ENCODE measurements at regions of chr4 and their contacts with region 1.

Region 1: GRCh38 chr4:39353478-39354253 is 12.5 kb downstream of the RFC1 start:
- DNase-seq: peak; percentile 44
- H3K4me3 Mint-ChIP-seq: peak overlapping the region; percentile 55
- H3K27ac Mint-ChIP-seq: peak overlapping the region; percentile 95
- H3K4me1 Mint-ChIP-seq: peaks cover 83% of the 10 kb centered on the region
- H3K27me3 Mint-ChIP-seq: no peaks in the 10 kb centered on the region

Region 2: DNA sequence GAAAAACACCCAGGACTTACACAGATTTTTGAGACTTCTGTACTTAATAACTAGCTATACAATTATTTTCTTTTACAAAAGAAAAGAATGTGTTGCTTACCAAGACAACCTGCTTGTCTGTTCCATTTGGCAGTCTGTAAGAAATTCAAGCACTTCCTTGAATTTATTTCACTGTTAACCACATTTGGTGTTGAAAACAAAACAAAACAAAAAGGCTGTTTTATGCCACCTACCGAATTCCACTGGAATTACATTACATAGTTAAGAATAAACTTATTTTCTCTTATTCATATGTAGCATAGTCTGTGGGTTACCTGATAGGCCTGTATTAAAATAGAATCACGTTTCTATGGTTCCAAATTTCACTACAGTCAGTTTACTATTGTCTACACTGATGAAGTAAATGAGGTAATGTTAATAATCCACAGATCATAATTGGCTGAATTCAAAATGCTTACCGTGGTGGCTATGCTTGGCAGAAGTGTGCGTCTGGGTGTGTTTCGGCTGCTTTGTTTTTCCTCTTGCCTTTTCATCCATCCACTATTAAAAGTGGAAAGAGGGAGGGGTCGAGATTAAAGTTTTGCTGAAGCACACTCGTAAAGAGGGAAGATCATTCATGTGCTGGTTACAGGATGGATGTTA is 548.9 kb before region 1 on chr4 and contains the start of gene TLR1:
- CTCF ChIA-PET with region 1: no interaction called
- intact Hi-C with region 1: loop called (anchors 1 kb)
- DNase-seq: peak; percentile 30
- H3K4me3 Mint-ChIP-seq: peak within 1 kb of the TSS; percentile 69
- H3K27ac Mint-ChIP-seq: peak within 1 kb of the TSS; percentile 90
- H3K4me1 Mint-ChIP-seq: peaks cover 30% of the 10 kb centered on the region
- H3K27me3 Mint-ChIP-seq: no peaks in the 10 kb centered on the region
- total RNA-seq, gene TLR1: 4.0 to 4.2 TPM

Region 3: DNA sequence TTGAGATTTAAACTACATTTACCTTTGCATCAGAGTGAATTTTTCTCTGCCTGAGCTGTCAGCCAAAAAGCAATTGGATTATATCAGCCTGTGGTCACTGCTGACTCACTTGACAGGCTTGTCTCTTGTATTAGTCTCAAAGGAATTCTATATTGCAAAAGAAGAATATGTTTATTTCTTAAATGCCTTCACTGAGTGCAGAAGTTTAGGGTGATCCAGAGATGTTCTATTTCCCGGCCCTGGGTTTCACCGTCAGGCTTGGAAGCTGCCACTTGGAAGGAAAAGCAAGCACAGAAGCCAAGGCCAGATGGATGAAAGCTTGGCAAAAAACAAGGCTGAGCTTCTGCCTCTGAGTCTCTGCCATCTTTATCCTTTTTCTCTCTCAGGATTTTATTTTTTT is 405.1 kb before region 1 on chr4:
- CTCF ChIA-PET with region 1: no interaction called
- intact Hi-C with region 1: loop called (anchors 2 kb)
- DNase-seq: no peak
- H3K4me3 Mint-ChIP-seq: no peak overlapping the region
- H3K27ac Mint-ChIP-seq: no peak overlapping the region
- H3K4me1 Mint-ChIP-seq: peaks cover 26% of the 10 kb centered on the region
- H3K27me3 Mint-ChIP-seq: no peaks in the 10 kb centered on the region

Region 4: GRCh38 chr4:39181905-39182638 is 171.6 kb before region 1 on chr4 and contains the start of gene WDR19:
- CTCF ChIA-PET with region 1: no interaction called
- intact Hi-C with region 1: loop called (anchors 1 kb)
- DNase-seq: peak; percentile 99
- H3K4me3 Mint-ChIP-seq: no peak within 1 kb of the TSS
- H3K27ac Mint-ChIP-seq: no peak within 1 kb of the TSS
- H3K4me1 Mint-ChIP-seq: peaks cover 6% of the 10 kb centered on the region
- H3K27me3 Mint-ChIP-seq: no peaks in the 10 kb centered on the region
- total RNA-seq, gene WDR19: 12.9 to 18.9 TPM

Region 5: GRCh38 chr4:39527273-39528060 is 173.8 kb after region 1 on chr4 and contains the start of gene UGDH:
- CTCF ChIA-PET with region 1: no interaction called
- intact Hi-C with region 1: loop called (anchors 2 kb)
- DNase-seq: peak; percentile 91
- H3K4me3 Mint-ChIP-seq: peak within 1 kb of the TSS; percentile 97
- H3K27ac Mint-ChIP-seq: peak within 1 kb of the TSS; percentile 81
- H3K4me1 Mint-ChIP-seq: peaks cover 18% of the 10 kb centered on the region
- H3K27me3 Mint-ChIP-seq: no peaks in the 10 kb centered on the region
- total RNA-seq, gene UGDH: 11.7 to 14.6 TPM

Region 6: GRCh38 chr4:39977489-39978377 is 624.1 kb after region 1 on chr4 and contains the start of gene PDS5A:
- CTCF ChIA-PET with region 1: no interaction called
- intact Hi-C with region 1: loop called (anchors 5 kb)
- DNase-seq: peak; percentile 91
- H3K4me3 Mint-ChIP-seq: peak within 1 kb of the TSS; percentile 93
- H3K27ac Mint-ChIP-seq: peak within 1 kb of the TSS; percentile 96
- H3K4me1 Mint-ChIP-seq: peaks cover 33% of the 10 kb centered on the region
- H3K27me3 Mint-ChIP-seq: no peaks in the 10 kb centered on the region
- total RNA-seq, gene PDS5A: 86.8 to 89.1 TPM

Region 7: DNA sequence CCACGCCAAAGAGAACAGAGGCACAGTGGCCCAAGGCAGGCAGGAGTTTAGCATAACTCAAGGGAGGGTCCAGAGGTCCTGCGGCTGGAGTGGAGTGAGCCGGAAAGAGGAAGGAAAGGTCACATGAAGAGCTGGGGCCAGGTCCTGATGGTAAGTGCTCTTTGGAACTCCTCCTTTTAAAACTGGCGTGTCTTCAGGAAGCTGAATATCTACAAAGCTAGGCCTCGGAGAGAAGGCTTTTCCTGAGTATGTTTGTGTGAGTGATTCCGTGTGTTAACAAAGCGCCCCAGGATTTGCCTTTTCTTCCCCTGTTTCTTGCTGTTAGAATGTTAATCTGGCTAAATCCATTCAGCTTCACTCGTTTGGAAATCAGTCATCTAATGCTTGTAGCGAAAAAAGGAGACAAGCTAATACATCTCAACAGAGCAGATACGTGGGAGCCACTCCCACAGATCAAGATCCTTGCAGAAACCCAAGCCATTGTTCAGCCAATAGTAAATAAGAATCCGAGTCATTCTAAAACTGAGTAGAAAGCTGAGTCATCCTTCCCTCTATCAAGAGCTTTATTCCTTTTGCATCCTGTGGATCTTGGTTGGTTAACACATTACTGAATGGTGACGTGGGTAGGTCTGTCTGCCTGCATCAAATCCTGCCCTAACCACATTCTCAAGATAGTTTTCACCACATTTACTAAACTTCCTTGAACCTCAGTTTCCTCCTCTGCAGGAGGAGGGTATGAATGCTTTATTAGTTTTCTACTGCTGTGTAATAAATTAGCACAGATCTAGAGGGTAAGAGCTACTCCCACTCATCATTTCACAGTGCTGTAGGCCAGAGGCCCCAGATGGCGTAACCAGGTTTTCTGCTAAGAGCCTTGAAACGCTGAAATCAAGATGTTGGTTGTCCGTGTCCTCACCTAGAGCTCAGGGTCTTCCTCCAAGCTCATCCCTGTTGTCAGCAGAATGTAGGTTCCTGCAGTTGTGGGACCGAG is 1319.2 kb after region 1 on chr4:
- CTCF ChIA-PET with region 1: no interaction called
- intact Hi-C with region 1: loop called (anchors 2 kb)
- DNase-seq: peak; percentile 67
- H3K4me3 Mint-ChIP-seq: peak overlapping the region; percentile 32
- H3K27ac Mint-ChIP-seq: peak overlapping the region; percentile 86
- H3K4me1 Mint-ChIP-seq: peaks cover 37% of the 10 kb centered on the region
- H3K27me3 Mint-ChIP-seq: no peaks in the 10 kb centered on the region